ENCODE measurements at regions of chr17 and their contacts with region 1.

Region 1: DNA sequence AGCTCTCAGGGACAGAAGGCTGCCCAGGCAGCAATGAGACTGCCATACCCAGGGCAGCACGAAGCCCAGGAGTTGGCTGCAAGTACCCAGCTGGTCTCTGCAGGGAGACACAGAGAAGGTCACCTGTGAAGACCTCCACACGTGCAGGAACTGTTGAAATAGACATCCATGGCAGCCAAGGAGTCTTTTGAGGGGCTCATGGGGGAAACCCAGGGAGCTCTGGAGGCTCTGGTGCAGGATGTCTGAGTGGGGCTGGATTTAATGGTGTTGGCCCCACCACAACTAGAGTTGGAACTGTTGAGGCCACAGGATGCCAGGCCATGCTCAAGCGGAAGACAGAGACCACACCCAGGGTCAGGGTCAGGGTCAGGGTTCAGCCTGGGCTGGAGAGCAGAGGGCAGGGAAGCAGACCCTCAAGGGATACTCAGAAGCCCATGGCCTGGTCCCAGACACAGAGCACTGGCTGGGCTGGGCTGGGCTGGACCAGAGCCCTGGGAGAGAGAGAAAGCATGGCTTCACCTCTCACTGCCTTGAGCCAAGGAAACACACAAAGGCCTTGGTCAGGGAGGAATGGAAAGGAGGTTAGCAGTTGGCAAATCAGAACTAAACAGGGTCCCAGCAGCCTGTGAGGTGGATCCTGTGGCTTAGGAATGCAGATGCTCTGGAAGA is 21.4 kb downstream of the PITPNM3 start:
- DNase-seq: no peak
- ATAC-seq: no peak
- H3K4me3 Mint-ChIP-seq: no peak overlapping the region
- H3K27ac Mint-ChIP-seq: no peak overlapping the region
- H3K4me1 Mint-ChIP-seq: peaks cover 17% of the 10 kb centered on the region
- H3K27me3 Mint-ChIP-seq: no peaks in the 10 kb centered on the region
- CTCF ChIP-seq: no peak

Region 2: DNA sequence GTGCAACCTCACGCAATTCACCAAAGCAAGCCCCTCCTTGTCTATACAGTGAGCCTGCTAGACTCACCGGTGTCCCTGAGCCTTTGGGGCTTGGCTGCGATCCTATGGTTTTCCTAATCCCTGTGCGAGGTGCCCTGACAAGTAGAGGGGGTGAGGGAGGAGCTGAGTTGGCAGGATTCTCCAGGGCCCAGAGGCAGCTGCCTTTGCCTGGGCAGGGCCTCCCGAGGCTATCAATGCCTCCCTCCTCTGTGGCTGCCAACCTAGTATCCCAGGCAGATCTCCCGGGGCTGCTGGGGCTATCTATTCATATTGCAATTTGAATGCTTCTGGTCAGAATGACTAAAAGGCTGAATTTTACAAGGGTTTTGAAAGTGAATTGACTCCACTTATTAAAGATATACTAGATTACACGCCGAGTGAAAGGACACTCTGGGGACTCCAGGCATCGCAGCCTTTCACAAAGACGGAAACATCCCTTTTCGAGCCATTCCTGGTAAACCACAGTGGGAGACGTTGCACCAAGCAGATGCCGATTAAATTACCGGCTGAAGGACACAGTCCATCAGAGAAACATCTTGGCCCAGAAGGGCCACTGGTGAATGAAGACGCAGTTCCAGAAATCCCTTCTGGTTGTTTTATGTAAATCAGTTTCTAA is 32.7 kb after region 1 on chr17:
- CTCF ChIA-PET with region 1: no interaction called
- POLR2A ChIA-PET with region 1: interaction called, 12 read pairs
- DNase-seq: no peak
- ATAC-seq: peak; percentile 77
- H3K4me3 Mint-ChIP-seq: no peak overlapping the region
- H3K27ac Mint-ChIP-seq: peak overlapping the region; percentile 89
- H3K4me1 Mint-ChIP-seq: peaks cover 20% of the 10 kb centered on the region
- H3K27me3 Mint-ChIP-seq: no peaks in the 10 kb centered on the region; the same call in 1 of the 2 replicates
- CTCF ChIP-seq: no peak

Region 3: GRCh38 chr17:6627019-6627418 is 92.0 kb after region 1 on chr17:
- CTCF ChIA-PET with region 1: no interaction called
- POLR2A ChIA-PET with region 1: no interaction called
- DNase-seq: no peak
- ATAC-seq: no peak
- H3K4me3 Mint-ChIP-seq: no peak overlapping the region
- H3K27ac Mint-ChIP-seq: no peak overlapping the region
- H3K4me1 Mint-ChIP-seq: no peaks in the 10 kb centered on the region
- H3K27me3 Mint-ChIP-seq: no peaks in the 10 kb centered on the region
- CTCF ChIP-seq: no peak